ENCODE measurements at regions of chr3 and their contacts with region 1.

Region 1: DNA sequence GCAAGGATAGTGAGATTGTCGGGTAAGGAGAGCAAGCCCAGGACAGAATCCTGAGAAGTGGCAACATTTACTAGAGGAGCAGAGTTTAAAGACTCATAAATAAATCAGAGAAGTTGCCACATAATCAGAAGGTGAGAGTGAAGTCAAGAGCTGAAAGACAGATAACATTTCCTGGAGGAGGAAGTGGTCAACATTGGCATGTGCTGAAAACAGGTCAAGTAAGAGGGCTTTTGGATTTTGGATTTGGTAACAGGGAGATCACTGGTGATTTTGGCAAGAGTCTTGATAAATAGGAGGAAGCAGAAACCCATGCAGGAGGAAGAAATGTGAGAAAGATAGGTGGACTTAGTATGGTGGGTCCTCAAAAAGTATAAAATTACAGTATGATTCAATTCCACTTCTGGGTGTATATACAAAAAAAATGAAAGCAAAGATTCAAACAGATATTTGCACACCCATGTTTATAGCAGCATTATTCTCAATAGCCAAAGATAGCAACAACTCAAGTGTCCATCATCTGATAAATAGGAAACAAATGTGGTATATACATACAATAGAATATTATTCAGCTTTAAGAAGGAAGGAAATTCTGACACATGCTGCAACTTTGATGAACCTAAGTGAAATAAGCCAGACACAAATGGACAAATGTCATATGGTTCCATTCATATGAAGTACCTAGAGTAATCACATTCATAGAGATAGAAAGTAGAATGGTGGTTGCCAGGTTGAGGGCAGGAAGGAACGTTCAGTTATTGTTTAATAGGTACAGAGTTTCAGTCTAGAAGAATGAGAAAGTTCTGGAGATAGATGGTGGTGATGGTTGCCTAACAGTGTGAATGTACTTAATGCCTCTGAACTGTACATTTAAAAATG is 27.3 kb upstream of the MBNL1 start:
- DNase-seq: peak; percentile 19 to 89
- H3K4me3 ChIP-seq: no peak overlapping the region
- H3K27ac ChIP-seq: peak overlapping the region; percentile 44
- H3K4me1 ChIP-seq: peaks cover 24% of the 10 kb centered on the region
- H3K27me3 ChIP-seq: no peaks in the 10 kb centered on the region
- CTCF ChIP-seq: no peak

Region 2: DNA sequence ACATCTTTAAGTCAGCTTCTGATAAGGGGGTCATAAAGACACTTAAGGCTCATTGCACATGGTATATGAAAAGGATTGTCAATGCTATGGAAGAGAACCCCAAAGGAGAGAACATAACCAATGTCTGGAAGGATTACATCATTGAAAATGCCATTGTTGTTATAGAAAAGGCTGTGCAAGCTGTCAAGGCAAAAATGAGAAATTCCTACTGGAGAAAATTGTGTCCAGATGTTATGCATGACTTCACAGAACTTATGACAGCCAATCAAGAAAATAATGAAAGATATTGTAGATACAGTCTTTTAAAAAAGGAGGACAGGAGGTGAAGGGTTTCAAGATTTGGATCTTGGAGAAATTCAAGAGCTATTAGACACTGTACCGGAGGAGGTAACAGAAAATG is 68.9 kb before region 1 on chr3:
- CTCF ChIA-PET with region 1: no interaction called
- POLR2A ChIA-PET with region 1: interaction called, 12 read pairs
- intact Hi-C with region 1: no loop called
- DNase-seq: no peak
- H3K4me3 ChIP-seq: no peak overlapping the region
- H3K27ac ChIP-seq: no peak overlapping the region
- H3K4me1 ChIP-seq: peaks cover 16% of the 10 kb centered on the region
- H3K27me3 ChIP-seq: no peaks in the 10 kb centered on the region
- CTCF ChIP-seq: no peak

Region 3: DNA sequence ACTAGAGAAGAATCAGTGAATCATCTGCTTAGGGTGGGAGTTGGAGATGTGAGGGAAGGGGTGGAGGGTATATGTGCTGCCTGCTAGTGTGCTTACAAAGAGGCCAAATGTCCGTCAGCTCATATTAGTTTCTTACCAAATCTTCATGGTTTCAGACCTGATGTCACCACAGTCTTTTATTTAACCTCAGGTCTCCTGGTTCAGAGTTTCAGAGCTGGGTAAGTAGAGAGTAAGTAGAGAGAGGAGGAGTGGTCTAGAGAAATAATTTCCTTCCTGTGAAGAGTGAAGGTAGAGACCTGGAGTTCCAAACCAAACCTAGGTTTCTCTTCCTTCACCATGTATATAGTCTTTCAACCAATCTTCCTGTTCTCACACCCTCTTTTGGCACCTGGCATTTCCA is 576.0 kb after region 1 on chr3:
- CTCF ChIA-PET with region 1: no interaction called
- POLR2A ChIA-PET with region 1: no interaction called
- intact Hi-C with region 1: no loop called
- DNase-seq: no peak
- H3K4me3 ChIP-seq: no peak overlapping the region
- H3K27ac ChIP-seq: no peak overlapping the region
- H3K4me1 ChIP-seq: no peaks in the 10 kb centered on the region
- H3K27me3 ChIP-seq: no peaks in the 10 kb centered on the region
- CTCF ChIP-seq: no peak